Dendritic cell treated with granulocyte-macrophage colony-stimulating factor and Interleukin-4, amounts not matched to agents 40 ng/mL and 50 ng/mL, for 4 days (primary cell): ENCODE measurements at regions of chr6 and their contacts with region 1.

Region 1: DNA sequence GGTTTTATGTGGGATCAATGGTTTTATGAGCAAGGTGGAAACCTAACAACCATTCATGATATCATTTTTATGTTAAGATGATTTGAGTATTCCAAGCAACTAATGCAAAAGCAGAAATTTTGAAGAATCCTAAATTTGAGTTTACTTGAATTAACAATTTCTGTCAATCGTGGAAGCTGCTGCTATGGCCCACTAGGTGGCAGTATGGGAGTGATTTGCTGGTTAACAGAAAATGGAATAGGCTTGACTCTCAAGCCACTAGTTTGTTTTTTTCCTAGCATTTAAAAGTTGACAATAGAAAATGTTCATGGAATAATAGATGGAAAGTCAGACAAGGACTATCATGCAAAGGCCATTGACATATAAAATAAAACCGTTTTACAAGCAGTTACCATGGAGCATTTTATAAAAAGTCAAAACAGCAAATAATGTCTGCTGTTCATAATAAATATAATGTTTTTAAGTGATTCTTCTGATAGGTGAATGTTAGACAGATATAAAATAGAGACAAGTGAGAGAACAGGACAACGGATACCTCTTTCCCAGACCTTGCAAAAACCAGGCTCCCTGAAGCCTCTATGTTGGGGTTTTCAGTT is 43.0 kb upstream of the TMEM200A start:
- H3K4me3 Mint-ChIP-seq: no peak overlapping the region
- H3K27ac Mint-ChIP-seq: no peak overlapping the region
- H3K4me1 Mint-ChIP-seq: no peaks in the 10 kb centered on the region
- H3K27me3 Mint-ChIP-seq: no peaks in the 10 kb centered on the region

Region 2: DNA sequence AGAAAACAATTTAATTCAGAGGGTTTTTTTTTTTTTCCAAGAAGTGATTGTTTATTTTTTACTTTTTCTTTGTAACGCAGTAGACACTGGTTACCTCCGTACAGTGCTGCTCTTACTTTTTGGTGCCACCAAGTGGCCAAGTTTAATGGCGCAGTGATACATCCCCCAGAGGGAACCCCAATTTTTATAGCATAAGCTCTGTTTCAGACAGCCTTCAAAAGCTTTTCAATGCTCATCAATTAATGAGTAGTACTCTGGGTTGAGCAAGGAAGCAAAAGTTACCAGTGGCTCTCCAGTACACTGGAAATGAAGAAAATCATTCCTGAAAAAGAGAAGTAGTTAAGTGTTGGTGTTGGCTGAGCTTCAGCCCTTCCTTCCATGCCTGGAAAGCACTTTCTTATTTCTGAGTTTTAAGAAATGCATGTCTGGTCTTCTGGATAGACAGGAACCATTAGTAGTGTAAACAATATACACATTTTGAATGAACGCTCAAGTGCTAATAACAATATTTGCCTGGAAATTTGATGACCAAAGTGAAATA is 375.3 kb after region 1 on chr6:
- intact Hi-C with region 1: loop called (anchors 2 kb)
- H3K4me3 Mint-ChIP-seq: no peak overlapping the region
- H3K27ac Mint-ChIP-seq: no peak overlapping the region
- H3K4me1 Mint-ChIP-seq: no peaks in the 10 kb centered on the region
- H3K27me3 Mint-ChIP-seq: no peaks in the 10 kb centered on the region

Region 3: DNA sequence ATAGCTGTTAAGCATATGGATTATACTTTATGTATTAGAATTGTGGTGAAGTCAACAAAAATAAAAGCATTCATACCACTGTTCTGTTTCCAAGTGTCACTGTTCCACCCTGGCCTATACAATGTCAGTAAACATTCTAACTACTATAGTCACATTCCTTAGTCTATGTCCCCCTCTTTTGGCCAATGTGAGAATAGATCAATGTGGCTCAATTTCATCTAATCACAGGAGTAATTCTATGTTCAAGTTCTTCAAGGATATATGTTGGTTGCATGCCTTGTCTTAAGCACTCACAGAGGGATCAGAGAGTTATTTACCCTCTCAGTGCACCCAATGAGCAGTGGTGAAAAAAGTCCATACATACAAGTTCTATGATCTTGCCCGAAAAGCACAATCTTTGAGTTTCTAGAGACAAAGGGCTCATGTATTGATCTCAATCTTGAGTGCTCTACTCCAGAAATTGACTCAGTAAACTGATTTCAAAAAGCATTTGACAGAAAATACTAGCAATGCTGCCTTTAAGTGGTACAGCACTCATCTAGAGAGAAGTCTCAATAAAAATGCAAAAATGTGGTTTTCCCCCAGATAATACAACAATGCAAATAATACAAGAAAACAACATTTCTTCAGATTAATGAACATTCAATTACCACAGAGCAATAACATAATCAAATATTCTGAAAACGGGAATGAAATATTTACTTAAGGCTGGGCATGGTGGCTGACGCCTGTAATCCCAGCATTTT is 521.0 kb after region 1 on chr6:
- intact Hi-C with region 1: loop called (anchors 5 kb)
- H3K4me3 Mint-ChIP-seq: no peak overlapping the region
- H3K27ac Mint-ChIP-seq: no peak overlapping the region
- H3K4me1 Mint-ChIP-seq: no peaks in the 10 kb centered on the region
- H3K27me3 Mint-ChIP-seq: no peaks in the 10 kb centered on the region

Region 4: GRCh38 chr6:130872250-130873095 is 549.7 kb after region 1 on chr6:
- intact Hi-C with region 1: loop called (anchors 2 kb)
- H3K4me3 Mint-ChIP-seq: no peak overlapping the region
- H3K27ac Mint-ChIP-seq: no peak overlapping the region
- H3K4me1 Mint-ChIP-seq: no peaks in the 10 kb centered on the region
- H3K27me3 Mint-ChIP-seq: no peaks in the 10 kb centered on the region